Caco-2 (cell line): ENCODE measurements at regions of chr1 and their contacts with region 1.

Region 1: DNA sequence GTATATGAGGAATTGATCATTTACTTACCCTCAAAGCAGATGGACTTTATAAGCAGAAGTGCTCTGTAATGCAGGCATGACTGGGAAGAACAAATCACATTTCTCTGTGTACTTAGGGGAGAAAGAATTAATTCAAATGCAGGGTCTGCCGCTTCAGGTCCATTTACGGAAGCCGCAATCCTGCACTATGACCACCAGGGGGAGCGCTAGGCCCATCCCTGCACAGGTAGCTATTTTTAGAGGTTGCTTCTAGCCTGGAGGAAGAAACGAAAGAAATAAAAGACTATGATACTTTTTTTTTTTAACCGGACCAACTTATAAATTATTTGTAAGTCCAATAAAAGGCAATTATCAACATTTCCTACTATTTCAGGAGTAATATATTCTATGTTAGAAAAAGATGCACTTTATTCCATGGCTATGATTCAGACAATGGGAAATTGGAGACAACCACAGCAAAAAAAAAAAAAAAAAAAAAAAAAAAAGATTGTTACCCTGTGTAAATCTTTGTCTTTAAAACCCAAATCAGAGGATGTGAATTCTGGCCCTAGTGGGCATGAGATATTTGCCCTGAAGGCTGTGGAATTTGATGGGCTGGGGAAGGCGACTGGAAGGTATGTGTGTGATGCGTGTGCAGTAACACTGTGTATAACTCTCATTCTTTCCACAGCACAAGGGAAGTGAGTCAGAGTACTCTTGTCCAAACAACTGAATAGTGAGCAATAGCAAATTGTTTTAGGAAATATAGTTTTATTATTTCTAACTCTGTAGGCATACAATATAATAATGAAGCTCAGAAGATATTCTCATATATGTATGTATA is 12.9 kb upstream of the FYB2 start:
- DNase-seq: peak; percentile 47 to 61
- H3K4me3 ChIP-seq: no peak overlapping the region
- H3K4me3 Mint-ChIP-seq: no peak overlapping the region
- H3K27ac Mint-ChIP-seq: no peak overlapping the region
- H3K4me1 ChIP-seq: no peaks in the 10 kb centered on the region
- H3K4me1 Mint-ChIP-seq: no peaks in the 10 kb centered on the region
- H3K27me3 ChIP-seq: no peaks in the 10 kb centered on the region
- H3K27me3 Mint-ChIP-seq: no peaks in the 10 kb centered on the region
- CTCF ChIP-seq: peak; percentile 79 to 85

Region 2: DNA sequence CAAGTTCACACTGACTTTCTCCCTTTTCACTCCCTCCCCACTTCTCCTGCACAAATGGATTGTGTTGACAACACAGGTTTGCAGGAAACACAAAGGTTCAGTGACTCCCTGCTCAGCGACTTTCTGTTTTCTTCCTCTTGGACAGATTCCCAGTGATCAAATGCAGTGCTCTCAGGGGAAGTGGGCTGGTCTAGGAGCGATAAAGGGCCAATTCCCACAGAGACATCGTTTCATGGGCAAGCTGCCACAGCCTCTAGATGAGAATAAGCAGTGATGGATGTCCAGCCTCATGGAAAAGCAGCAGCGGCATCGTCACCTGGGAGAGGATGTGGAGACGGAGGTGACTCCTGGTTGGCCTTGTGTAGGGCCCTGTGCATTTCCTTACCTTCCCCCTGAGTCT is 43.5 kb before region 1 on chr1:
- CTCF ChIA-PET with region 1: no interaction called
- POLR2A ChIA-PET with region 1: no interaction called
- intact Hi-C with region 1: no loop called
- DNase-seq: no peak
- H3K4me3 ChIP-seq: no peak overlapping the region
- H3K4me3 Mint-ChIP-seq: no peak overlapping the region
- H3K27ac Mint-ChIP-seq: no peak overlapping the region
- H3K4me1 ChIP-seq: no peaks in the 10 kb centered on the region
- H3K4me1 Mint-ChIP-seq: peaks cover 7% of the 10 kb centered on the region
- H3K27me3 ChIP-seq: no peaks in the 10 kb centered on the region
- H3K27me3 Mint-ChIP-seq: no peaks in the 10 kb centered on the region
- CTCF ChIP-seq: no peak

Region 3: GRCh38 chr1:56986397-56986796 is 154.3 kb after region 1 on chr1:
- CTCF ChIA-PET with region 1: interaction called, 3 read pairs
- POLR2A ChIA-PET with region 1: no interaction called
- intact Hi-C with region 1: loop called (anchors 5 kb)
- DNase-seq: no peak
- H3K4me3 ChIP-seq: no peak overlapping the region
- H3K4me3 Mint-ChIP-seq: no peak overlapping the region
- H3K27ac Mint-ChIP-seq: peak overlapping the region; percentile 67
- H3K4me1 ChIP-seq: peaks cover 25% of the 10 kb centered on the region
- H3K4me1 Mint-ChIP-seq: peaks cover 20% of the 10 kb centered on the region
- H3K27me3 ChIP-seq: no peaks in the 10 kb centered on the region
- H3K27me3 Mint-ChIP-seq: no peaks in the 10 kb centered on the region
- CTCF ChIP-seq: no peak

Region 4: DNA sequence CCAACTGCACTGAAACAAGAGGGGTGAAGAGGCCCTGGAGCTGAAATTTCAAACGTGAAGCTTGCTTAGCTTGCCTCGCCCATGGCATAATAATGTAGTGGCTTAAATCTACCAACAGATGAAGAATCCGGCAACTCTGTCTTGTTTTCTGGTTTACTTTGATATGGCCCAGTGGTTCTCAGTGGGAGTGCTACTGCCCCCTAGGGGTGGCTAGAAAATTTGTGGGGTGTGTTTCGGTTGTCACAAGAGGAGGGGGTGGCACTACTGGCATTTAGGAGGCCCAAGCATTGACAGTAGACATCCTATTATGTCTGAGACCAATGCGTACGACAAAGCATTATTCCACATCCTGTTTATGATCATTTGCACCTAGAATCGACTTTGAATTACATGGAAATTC is 185.6 kb after region 1 on chr1:
- CTCF ChIA-PET with region 1: no interaction called
- POLR2A ChIA-PET with region 1: no interaction called
- intact Hi-C with region 1: loop called (anchors 2 kb)
- DNase-seq: peak in 1 of 2 experiments; percentile 6
- H3K4me3 ChIP-seq: no peak overlapping the region
- H3K4me3 Mint-ChIP-seq: no peak overlapping the region
- H3K27ac Mint-ChIP-seq: no peak overlapping the region
- H3K4me1 ChIP-seq: no peaks in the 10 kb centered on the region
- H3K4me1 Mint-ChIP-seq: peaks cover 6% of the 10 kb centered on the region
- H3K27me3 ChIP-seq: no peaks in the 10 kb centered on the region
- H3K27me3 Mint-ChIP-seq: no peaks in the 10 kb centered on the region
- CTCF ChIP-seq: peak in 1 of 2 experiments; percentile 42

Region 5: GRCh38 chr1:57061369-57061768 is 229.3 kb after region 1 on chr1:
- CTCF ChIA-PET with region 1: interaction called, 12 read pairs
- POLR2A ChIA-PET with region 1: no interaction called
- intact Hi-C with region 1: loop called (anchors 1 kb)
- DNase-seq: peak; percentile 34 to 46
- H3K4me3 ChIP-seq: no peak overlapping the region
- H3K4me3 Mint-ChIP-seq: no peak overlapping the region
- H3K27ac Mint-ChIP-seq: no peak overlapping the region
- H3K4me1 ChIP-seq: peaks cover 15% of the 10 kb centered on the region
- H3K4me1 Mint-ChIP-seq: peaks cover 15% of the 10 kb centered on the region
- H3K27me3 ChIP-seq: no peaks in the 10 kb centered on the region
- H3K27me3 Mint-ChIP-seq: no peaks in the 10 kb centered on the region
- CTCF ChIP-seq: no peak

Region 6: DNA sequence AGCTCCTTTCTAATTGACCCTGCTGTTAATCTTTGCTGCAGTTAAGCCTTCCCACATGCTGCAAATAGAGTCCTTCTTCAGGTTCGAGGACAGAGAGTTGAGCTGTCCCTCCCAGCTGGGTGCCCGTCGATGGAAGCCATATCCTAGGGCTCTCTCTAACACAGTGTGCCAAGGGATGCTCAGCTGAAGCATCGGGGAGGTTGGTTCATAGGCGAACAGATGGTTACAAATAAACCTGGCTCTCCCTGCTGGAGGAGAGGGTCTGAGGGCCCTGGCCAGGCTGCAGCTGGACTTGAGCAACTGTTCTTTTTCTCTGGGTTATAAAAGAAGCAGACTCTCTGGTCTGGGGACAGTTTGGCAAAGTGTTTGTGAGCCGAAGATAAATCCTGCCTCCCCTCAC is 254.1 kb after region 1 on chr1:
- CTCF ChIA-PET with region 1: no interaction called
- POLR2A ChIA-PET with region 1: no interaction called
- intact Hi-C with region 1: no loop called
- DNase-seq: no peak
- H3K4me3 ChIP-seq: no peak overlapping the region
- H3K4me3 Mint-ChIP-seq: no peak overlapping the region
- H3K27ac Mint-ChIP-seq: no peak overlapping the region
- H3K4me1 ChIP-seq: no peaks in the 10 kb centered on the region
- H3K4me1 Mint-ChIP-seq: peaks cover 5% of the 10 kb centered on the region
- H3K27me3 ChIP-seq: no peaks in the 10 kb centered on the region
- H3K27me3 Mint-ChIP-seq: no peaks in the 10 kb centered on the region
- CTCF ChIP-seq: no peak

Region 7: GRCh38 chr1:57124768-57125446 is 292.8 kb after region 1 on chr1:
- CTCF ChIA-PET with region 1: no interaction called
- POLR2A ChIA-PET with region 1: no interaction called
- intact Hi-C with region 1: loop called (anchors 10 kb)
- DNase-seq: no peak
- H3K4me3 ChIP-seq: no peak overlapping the region
- H3K4me3 Mint-ChIP-seq: no peak overlapping the region
- H3K27ac Mint-ChIP-seq: peak overlapping the region; percentile 48
- H3K4me1 ChIP-seq: no peaks in the 10 kb centered on the region
- H3K4me1 Mint-ChIP-seq: no peaks in the 10 kb centered on the region
- H3K27me3 ChIP-seq: no peaks in the 10 kb centered on the region
- H3K27me3 Mint-ChIP-seq: no peaks in the 10 kb centered on the region
- CTCF ChIP-seq: no peak

Region 8: DNA sequence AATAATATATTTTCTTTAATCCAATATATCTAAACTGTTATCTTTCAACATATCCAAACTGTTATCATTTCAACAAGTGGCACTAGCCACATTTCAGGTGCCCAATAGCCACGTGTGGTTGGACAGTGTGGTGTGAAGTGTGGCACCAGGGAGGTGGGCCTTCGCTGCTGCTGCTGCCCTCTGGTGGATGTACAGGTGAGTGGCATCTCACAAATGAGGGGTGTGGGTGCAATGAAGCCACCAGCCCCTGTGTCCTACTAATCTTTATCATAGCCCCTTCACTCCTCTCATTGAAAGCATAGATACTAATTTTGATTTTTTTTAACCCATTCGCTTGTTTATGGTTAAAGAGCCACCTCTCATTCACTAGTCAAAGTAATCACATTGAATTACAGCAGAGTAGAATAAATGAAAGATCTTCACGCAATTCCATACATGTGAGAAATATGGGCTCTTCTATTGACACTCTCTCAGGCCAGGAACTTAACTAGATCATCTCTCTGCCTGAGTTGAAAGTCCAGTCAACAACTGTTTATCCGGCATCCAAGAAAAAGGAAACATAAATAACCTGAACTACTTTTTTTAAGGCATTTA is 1215.3 kb after region 1 on chr1:
- CTCF ChIA-PET with region 1: no interaction called
- POLR2A ChIA-PET with region 1: no interaction called
- intact Hi-C with region 1: loop called (anchors 10 kb)
- DNase-seq: peak in 1 of 2 experiments; percentile 39
- H3K4me3 ChIP-seq: no peak overlapping the region
- H3K4me3 Mint-ChIP-seq: no peak overlapping the region
- H3K27ac Mint-ChIP-seq: no peak overlapping the region
- H3K4me1 ChIP-seq: no peaks in the 10 kb centered on the region
- H3K4me1 Mint-ChIP-seq: no peaks in the 10 kb centered on the region
- H3K27me3 ChIP-seq: no peaks in the 10 kb centered on the region
- H3K27me3 Mint-ChIP-seq: no peaks in the 10 kb centered on the region
- CTCF ChIP-seq: peak; percentile 57 to 65